ENCODE measurements at regions of chr19 and their contacts with region 1.

Region 1: DNA sequence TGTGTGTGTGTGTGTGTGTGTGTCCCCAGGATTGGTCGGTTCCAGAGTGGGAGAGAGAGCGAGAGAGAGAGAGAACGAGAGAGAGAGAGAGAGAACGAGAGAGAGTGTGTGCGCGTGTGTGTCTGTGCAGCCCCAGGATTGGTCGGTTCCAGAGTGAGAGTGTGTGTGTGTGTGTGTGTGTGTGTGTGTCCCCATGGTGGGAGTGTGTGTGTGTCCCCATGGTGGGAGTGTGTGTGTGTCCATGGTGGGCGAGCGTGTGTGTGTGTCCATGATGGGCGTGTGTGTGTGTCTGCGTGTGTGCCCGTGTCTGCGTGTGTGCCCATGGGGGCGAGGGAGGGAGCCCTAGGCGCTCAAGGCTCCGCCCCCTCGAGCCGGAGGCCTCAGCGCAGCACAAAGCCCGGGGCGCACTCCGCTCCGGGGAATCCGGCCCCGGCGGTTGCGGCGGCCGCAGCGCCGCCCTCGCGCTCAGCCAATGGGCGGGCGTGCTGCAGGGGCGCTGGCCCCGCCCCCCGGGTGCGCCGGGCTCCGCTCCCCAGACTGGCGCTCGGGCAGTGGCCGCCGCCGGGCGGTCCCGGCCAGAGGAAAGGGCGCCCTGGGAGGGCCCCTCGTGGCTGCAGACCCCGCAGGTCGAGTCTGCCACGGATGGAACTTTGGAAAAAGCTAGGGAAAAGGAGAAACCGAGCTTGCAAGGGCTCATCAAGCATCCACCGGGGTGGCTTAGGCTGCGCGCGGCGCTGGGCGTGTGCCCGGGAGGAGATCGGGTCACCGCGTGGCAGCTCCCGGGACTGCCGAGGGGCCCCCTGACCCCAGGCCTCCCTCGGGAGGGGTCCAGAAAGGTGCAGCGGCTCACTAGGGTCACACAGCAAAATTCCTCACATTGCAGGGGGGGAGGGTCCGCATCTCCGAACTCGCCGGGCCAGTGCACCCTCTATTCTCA is 96.2 kb downstream of the INSR start:
- DNase-seq: peak; percentile 98
- H3K4me3 Mint-ChIP-seq: peak overlapping the region; percentile 83
- H3K27ac Mint-ChIP-seq: peak overlapping the region; percentile 87
- H3K4me1 Mint-ChIP-seq: peaks cover 19% of the 10 kb centered on the region
- H3K27me3 Mint-ChIP-seq: peaks cover 33% of the 10 kb centered on the region

Region 2: DNA sequence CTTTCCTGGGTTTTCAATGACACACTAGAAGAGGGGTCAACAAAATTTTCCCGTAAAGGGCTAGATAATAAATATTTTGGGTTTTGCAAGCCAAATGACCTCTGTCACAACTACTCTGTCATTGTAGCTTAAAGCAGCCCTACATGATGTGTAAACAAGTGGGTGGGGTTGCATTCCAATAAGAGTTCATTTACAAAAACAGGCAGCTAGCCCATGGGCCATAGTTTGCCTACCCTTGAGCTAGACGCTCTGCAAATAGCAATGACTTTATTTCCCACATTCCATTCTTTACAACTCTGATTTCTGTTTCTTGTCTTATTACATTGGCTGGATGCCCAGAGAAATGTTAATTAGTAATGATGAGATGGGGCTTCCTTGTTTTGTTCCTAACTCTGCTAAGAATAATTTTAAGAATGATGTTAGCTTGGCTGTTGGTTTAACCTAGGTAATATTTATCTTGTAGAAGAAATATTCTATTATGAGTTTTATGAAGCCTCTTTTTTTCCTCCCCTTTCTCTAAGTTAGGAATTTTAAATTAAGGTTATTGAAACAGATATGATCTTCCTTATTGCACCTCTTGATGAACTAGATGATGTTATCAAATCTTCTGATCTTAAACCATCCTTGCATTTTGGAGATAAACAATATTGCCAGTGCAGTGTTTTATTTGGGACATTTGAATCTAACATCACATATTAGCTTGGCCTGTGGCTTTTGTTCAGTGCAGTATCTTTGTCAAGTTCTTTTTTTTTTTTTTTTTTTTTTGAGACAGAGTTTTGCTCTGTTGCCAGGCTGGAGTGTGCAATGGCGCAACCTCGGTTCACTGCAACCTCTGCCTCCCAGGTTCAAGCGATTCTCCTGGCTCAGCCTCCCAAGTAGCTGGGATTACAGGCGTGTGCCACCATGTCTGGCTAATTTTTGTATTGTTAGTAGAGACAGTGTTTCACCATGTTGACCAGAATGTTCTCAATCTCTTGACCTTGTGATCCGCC is 52.2 kb before region 1 on chr19:
- intact Hi-C with region 1: loop called (anchors 5 kb)
- DNase-seq: no peak
- H3K4me3 Mint-ChIP-seq: no peak overlapping the region
- H3K27ac Mint-ChIP-seq: no peak overlapping the region
- H3K4me1 Mint-ChIP-seq: no peaks in the 10 kb centered on the region
- H3K27me3 Mint-ChIP-seq: no peaks in the 10 kb centered on the region

Region 3: GRCh38 chr19:7179917-7180306 is 18.1 kb before region 1 on chr19:
- intact Hi-C with region 1: loop called (anchors 1 kb)
- DNase-seq: no peak
- H3K4me3 Mint-ChIP-seq: no peak overlapping the region
- H3K27ac Mint-ChIP-seq: no peak overlapping the region
- H3K4me1 Mint-ChIP-seq: peaks cover 17% of the 10 kb centered on the region
- H3K27me3 Mint-ChIP-seq: no peaks in the 10 kb centered on the region

Region 4: DNA sequence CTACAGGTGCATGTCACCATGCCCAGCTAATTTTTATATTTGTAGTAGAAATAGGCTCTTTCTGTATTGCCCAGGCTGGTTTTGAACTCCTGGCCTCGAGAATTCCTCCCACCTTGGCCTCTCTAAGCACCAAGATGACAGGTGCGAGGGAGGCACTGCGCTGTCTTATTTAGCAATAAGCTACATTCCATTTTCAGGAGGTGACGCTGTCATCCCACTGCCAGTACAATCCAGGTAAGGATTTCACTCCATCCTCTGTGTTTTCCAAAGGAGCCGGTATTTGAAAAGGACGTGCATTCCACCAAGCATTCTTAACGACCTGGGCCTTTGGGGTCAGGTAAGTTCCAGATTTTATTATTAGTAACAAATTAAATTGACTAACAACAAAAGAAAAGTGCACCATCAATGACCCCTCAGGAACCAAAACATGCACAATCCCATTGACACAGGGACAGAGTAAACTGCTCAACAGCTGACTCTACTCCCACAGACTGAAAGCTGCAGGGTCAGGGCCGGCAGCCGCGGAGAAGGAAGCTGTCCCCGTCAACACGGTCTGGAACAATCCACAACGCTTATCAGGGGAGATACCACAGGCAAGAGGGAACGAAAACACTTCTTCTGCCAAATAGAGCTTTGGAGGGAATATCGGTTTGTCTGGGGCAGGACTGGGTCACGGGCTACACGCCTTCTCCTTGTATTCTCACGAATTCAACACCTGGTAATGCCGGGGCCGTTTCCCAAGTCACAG is 13.3 kb after region 1 on chr19:
- intact Hi-C with region 1: no loop called
- DNase-seq: no peak
- H3K4me3 Mint-ChIP-seq: no peak overlapping the region
- H3K27ac Mint-ChIP-seq: no peak overlapping the region
- H3K4me1 Mint-ChIP-seq: peaks cover 11% of the 10 kb centered on the region
- H3K27me3 Mint-ChIP-seq: peaks cover 2% of the 10 kb centered on the region

Region 5: GRCh38 chr19:7293795-7294570 is 96.0 kb after region 1 on chr19 and contains the start of gene INSR:
- intact Hi-C with region 1: loop called (anchors 1 kb)
- DNase-seq: peak; percentile 86
- H3K4me3 Mint-ChIP-seq: peak within 1 kb of the TSS; percentile 72
- H3K27ac Mint-ChIP-seq: no peak within 1 kb of the TSS
- H3K4me1 Mint-ChIP-seq: peaks cover 6% of the 10 kb centered on the region
- H3K27me3 Mint-ChIP-seq: peaks cover 39% of the 10 kb centered on the region
- total RNA-seq, gene INSR: 1.7 and 1.9 TPM in 2 replicates

Region 6: DNA sequence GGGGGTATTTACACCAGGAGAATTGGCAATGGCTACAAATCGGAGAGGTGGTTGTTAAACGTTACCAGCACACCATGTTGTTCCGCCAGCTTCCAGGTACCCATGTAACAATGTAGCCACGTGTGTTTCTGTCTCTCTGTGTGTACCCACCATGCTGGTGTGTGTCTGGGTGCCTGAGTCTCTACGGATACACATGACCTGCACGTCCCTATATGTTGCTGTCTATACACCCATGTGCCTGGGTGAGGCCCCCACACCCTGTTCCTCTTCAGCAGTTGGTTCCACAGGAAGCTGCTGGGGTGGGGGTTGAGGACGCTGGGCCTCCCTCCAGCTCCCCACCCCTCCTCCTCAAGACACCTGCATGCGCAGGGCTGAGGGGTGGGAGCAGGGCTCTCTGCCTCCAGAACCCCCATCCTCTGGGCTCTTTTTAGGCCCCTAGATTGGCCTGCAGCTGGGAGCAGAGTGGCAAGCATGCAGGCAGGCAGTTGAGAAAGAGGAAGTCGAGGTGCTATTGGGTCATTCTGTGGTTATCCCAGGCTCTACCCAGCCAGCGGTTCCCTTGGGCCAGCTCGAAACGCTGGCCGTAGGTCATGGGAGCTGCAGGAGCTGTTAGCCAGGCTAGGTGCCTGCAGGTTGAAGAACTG is 150.7 kb after region 1 on chr19 and contains the start of gene ARHGEF18:
- intact Hi-C with region 1: loop called (anchors 5 kb)
- DNase-seq: peak; percentile 85
- H3K4me3 Mint-ChIP-seq: peak within 1 kb of the TSS; percentile 94
- H3K27ac Mint-ChIP-seq: peak within 1 kb of the TSS; percentile 95
- H3K4me1 Mint-ChIP-seq: peaks cover 57% of the 10 kb centered on the region
- H3K27me3 Mint-ChIP-seq: no peaks in the 10 kb centered on the region
- total RNA-seq, gene ARHGEF18: 30.6 and 34.8 TPM in 2 replicates

Region 7: DNA sequence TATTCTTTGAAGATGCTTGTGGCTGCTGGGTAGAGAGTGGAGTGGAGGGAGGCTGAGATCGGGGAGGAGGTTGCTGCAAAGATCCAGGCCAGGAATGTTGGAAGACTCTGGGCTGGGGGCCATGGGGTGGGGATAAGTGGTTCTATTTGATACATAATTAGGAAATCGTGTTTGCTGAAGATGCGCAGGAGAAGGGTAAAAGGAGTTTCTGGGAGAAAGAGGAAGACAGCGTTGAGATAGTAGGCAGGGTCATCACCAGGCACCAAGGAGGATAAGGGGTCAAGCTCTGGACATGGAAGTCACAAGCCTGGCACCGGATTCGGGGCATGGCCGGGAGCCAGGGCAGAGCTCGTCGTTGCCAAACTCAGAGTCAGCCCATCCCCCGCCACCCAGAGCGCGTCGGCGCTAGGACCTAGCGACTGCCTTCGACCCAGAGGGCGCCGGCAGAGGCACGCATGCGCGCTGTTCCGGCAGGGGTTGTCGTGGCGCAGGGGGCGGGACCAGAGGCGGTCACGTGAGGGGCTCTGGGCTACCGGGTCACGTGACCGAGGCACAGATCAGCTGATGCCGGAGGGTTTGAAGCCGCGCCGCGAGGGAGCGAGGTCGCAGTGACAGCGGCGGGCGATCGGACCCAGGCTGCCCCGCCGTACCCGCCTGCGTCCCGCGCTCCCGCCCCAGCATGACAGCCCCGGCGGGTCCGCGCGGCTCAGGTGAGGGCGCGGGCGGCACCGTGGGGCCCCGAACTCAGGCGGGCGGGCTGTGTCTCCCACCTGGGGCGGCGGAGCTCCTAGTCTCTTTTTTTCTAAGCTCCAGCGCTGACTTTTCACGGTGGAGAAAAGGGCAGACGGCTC is 324.3 kb after region 1 on chr19 and contains the start of gene MCOLN1:
- intact Hi-C with region 1: loop called (anchors 10 kb)
- DNase-seq: peak; percentile 100
- H3K4me3 Mint-ChIP-seq: peak within 1 kb of the TSS; percentile 81
- H3K27ac Mint-ChIP-seq: peak within 1 kb of the TSS; percentile 87
- H3K4me1 Mint-ChIP-seq: peaks cover 9% of the 10 kb centered on the region
- H3K27me3 Mint-ChIP-seq: peaks cover 12% of the 10 kb centered on the region
- total RNA-seq, gene MCOLN1: 13.3 and 13.7 TPM in 2 replicates

Region 8: DNA sequence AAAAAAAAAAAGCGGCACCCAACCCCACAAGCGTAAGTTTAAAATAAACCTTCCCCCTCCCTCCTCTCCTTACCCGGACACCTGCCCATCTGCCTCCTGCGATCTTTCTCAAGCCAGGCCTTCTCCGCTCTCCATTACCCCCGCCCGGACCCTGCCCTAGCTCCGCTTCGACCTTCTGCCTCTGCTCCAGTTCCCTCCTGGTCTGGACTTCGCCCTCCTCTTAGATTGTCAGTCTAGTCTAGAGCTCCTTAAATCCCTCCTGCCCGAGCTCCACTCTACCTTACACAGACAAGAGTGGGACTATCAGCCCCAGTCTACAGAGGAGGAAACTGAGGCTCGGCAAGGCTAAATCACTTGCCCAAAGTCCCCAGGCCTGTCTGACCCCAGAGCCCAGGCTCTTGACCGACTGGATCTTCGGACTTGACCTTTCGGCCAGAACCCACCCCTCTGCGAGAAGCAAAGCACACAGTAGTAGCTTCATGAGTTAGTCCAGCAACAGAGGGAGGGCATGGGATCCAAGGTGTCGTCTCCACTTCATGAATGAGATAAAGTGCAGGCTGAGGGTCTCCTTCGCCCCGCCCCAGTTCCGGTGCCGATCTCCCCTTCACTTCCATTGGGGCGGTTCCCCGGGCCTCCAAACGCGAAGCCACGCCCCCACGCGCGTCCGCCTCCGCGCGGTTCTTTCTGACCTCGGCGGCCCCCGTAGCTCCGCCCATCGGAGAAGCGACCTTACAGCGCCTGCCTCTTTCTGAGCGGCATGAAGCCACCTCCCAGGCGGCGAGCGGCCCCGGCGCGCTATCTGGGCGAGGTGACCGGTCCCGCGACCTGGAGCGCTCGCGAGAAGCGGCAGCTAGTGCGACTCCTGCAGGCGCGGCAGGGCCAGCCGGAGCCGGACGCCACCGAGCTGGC is 721.8 kb after region 1 on chr19 and contains the start of gene SNAPC2:
- intact Hi-C with region 1: loop called (anchors 5 kb)
- DNase-seq: peak; percentile 99
- H3K4me3 Mint-ChIP-seq: peak within 1 kb of the TSS; percentile 94
- H3K27ac Mint-ChIP-seq: peak within 1 kb of the TSS; percentile 98
- H3K4me1 Mint-ChIP-seq: peaks cover 28% of the 10 kb centered on the region
- H3K27me3 Mint-ChIP-seq: peaks cover 28% of the 10 kb centered on the region
- total RNA-seq, gene SNAPC2: 21.8 and 23.2 TPM in 2 replicates